ENCODE measurements at regions of chr12 and their contacts with region 1.

Region 1: DNA sequence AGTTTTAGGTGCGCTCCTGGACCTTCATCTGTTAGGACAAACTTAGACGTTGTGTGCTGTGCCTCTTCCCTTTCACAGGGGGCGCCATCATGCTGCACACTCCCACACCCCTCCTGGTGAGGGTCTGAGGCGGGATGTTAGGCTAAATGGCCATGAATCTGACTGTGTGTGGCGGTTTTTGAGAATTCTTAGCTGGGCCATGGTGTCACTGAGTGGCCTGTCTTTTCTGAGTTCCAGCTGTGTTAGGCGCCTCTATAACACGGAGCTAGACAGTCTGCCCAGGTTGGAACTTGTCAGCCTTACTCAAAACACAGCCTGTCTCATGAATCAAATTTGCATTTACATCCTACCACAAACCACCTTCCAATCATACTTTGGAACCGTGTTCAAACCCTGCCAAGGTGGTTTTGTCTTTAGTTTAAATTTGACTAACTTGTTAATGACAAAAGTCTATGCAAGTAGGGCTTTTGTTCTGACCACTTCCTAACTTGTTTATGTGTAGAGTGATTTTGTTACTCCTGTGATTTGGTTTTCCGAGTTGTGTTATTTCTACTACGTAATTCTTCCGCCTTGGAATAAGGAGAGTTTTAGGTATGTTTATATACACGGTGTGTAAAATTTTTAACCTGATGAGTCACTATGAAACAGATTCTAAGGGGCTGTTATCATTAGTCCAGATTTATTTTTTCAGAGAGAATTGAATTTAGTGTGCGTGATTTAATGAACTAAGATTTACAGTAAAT is 19.6 kb downstream of the ACVR1B start:
- DNase-seq: peak; percentile 44
- H3K4me3 Mint-ChIP-seq: peak overlapping the region; percentile 55
- H3K27ac Mint-ChIP-seq: peak overlapping the region; percentile 38
- H3K4me1 Mint-ChIP-seq: peaks cover 57% of the 10 kb centered on the region
- H3K27me3 Mint-ChIP-seq: peaks cover 43% of the 10 kb centered on the region

Region 2: DNA sequence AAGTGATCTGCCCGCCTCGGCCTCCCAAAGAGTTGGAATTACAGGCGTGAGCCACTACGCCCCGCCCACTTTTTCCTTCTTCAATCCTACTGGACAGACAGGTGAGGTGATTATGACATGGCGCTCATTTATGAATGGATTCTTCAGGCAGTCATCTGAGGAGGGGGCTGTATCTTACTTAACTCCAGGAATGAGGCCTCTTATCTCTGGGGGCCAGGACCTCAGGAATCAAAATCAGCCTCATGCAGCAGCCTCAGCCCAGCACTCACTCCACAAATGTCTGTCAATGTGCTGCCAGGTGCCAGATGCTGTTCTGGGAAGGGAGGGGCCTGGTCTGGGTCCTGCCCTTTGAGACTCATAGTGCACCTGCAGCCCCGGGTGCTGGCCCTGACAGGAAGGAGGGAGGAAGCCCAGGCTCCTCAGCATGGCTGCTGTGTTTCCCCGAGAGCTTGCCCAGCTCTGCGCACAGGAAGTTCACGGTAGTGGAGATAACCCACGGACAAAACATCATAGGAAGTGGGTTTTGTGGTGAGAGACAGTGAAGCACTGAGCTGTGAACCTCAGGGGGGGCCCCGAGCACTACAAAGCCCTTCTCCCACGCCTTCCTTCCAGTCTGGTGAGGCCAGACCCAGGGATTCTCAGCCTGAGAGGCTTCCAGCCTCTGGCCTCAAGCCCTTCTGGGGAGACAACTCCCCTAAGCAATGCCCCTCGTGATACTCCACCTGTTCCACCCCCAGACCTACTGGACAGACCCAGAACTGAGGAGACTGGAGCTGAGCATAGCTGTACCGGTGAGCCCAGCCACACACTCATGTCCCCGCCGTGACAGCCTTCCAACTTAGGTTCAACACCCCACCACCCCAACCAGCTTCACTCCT is 602.2 kb before region 1 on chr12:
- intact Hi-C with region 1: loop called (anchors 1 kb)
- DNase-seq: peak; percentile 87
- H3K4me3 Mint-ChIP-seq: peak overlapping the region; percentile 27
- H3K27ac Mint-ChIP-seq: peak overlapping the region; percentile 49
- H3K4me1 Mint-ChIP-seq: peaks cover 51% of the 10 kb centered on the region
- H3K27me3 Mint-ChIP-seq: no peaks in the 10 kb centered on the region

Region 3: GRCh38 chr12:51823875-51824565 is 147.1 kb before region 1 on chr12:
- intact Hi-C with region 1: loop called (anchors 5 kb)
- DNase-seq: no peak
- H3K4me3 Mint-ChIP-seq: no peak overlapping the region
- H3K27ac Mint-ChIP-seq: no peak overlapping the region
- H3K4me1 Mint-ChIP-seq: peaks cover 20% of the 10 kb centered on the region
- H3K27me3 Mint-ChIP-seq: peaks cover 14% of the 10 kb centered on the region

Region 4: DNA sequence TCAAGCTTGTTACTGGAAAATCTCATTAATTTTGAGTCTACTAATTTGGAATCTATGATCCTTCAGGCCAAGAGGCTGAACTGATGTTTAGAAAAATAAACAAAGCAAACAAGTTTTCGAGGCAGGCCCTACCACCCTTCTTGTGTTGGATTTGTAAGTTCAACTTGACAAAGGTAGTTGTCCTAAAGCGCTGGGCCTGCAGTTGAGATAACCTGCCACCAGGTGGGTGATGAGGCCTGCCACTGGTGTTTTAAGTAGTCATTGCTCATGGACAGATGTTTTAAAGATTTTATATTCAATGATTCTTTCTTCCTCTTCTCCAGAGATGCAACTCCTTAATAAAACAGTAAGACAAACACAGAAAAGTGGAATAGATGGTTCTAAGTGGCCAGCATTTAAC is 44.4 kb before region 1 on chr12:
- intact Hi-C with region 1: loop called (anchors 2 kb)
- DNase-seq: peak; percentile 18
- H3K4me3 Mint-ChIP-seq: no peak overlapping the region
- H3K27ac Mint-ChIP-seq: no peak overlapping the region
- H3K4me1 Mint-ChIP-seq: peaks cover 3% of the 10 kb centered on the region
- H3K27me3 Mint-ChIP-seq: peaks cover 22% of the 10 kb centered on the region

Region 5: DNA sequence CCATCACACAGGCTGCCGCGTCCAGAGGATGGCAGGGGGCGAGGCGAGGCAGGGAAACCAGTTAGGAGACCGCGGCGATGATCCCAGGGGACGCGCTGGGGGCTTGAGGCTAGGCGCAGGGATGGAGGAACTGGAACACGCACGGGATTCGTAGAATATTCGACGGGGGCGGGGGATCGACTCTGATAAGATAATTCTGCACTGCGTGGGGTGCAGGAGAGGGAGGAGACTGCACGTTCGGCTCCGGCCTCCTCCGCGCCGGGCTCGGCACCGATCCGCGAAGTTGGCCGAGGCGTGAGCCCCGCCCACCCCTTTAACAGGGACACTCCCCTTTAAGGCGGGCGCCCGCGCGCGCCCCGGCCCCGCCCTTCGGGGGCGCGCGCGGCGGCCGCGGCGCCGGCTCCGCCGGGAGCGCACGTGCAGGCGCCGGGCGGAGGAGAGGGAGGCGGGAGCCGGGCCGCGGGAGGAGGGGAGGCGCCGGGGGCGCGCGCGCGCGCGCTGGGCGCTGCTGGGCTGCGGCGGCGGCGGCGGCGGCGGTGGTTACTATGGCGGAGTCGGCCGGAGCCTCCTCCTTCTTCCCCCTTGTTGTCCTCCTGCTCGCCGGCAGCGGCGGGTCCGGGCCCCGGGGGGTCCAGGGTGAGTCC is 19.8 kb before region 1 on chr12 and contains the start of gene ACVR1B:
- intact Hi-C with region 1: loop called (anchors 1 kb)
- DNase-seq: peak; percentile 78
- H3K4me3 Mint-ChIP-seq: peak within 1 kb of the TSS; percentile 80
- H3K27ac Mint-ChIP-seq: no peak within 1 kb of the TSS
- H3K4me1 Mint-ChIP-seq: peaks cover 6% of the 10 kb centered on the region
- H3K27me3 Mint-ChIP-seq: peaks cover 73% of the 10 kb centered on the region
- total RNA-seq, gene ACVR1B: 2.4 and 2.5 TPM in 2 replicates